ENCODE measurements at regions of chr14 and their contacts with region 1.

Region 1: GRCh38 chr14:89578156-89578555 is 161.1 kb upstream of the FOXN3 start:
- DNase-seq: no peak
- H3K4me3 ChIP-seq: peak overlapping the region in 1 of 2 donors; percentile 4
- H3K27ac ChIP-seq: peak overlapping the region; percentile 80 to 85
- H3K4me1 ChIP-seq: peaks cover 24 to 33% of the 10 kb centered on the region in 2 donors
- H3K27me3 ChIP-seq: no peaks in the 10 kb centered on the region
- CTCF ChIP-seq: no peak

Region 2: DNA sequence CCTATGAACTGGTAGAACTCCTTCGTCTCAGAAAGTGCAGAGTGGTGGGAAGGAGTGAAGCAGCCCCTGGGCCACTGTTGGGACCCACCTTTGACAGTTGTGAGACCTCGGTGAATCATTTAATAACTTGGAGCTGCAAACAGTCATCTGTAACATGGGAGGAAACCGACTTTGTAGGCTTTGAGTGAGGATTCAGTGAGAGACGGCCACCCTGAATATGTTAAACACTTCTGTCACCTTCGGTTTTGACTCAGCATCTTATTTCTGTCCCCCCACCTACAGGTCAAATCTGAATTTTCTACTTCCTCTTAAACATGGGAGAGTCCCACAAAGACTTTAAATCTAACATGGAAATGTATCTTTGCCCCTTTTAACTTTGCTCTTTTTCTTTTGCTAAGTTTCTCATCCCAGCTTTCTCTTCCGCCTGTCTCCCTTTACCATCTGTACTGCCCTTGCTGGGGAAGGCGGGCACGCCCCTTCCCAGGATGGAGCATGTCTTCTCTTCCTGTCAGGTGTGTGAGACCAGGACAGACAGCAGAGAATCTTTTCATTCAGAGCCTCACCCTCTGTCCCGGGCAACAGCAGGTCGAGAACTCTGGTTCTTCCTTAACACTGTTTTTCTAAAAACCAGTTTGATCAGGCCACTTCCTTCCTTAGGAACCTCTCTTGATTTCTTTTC is 978.3 kb before region 1 on chr14:
- intact Hi-C with region 1: no loop called
- DNase-seq: no peak
- H3K4me3 ChIP-seq: no peak overlapping the region
- H3K27ac ChIP-seq: no peak overlapping the region
- H3K4me1 ChIP-seq: no peaks in the 10 kb centered on the region
- H3K27me3 ChIP-seq: no peaks in the 10 kb centered on the region
- CTCF ChIP-seq: no peak

Region 3: DNA sequence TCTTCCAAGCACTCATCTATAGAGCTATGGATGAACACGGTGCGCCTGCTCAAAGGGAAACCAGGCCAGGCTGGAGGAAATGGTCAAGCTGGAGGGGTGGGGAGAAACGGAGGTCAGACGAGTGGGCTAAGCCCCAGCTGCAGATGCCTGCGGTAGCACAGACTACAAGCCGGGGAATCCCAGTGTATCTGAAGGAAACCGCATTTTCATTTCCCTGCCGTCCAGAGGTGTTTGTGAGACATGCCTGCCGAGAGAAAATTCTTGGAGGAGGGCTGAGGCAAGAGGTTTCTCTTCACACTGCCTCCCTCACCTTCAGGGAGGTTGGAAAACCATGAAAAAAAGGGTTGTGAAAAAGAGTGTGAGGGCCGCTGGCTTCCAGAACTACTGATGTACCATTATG is 59.1 kb before region 1 on chr14:
- intact Hi-C with region 1: no loop called
- DNase-seq: peak in 1 of 2 donors; percentile 1
- H3K4me3 ChIP-seq: no peak overlapping the region
- H3K27ac ChIP-seq: no peak overlapping the region
- H3K4me1 ChIP-seq: no peaks in the 10 kb centered on the region
- H3K27me3 ChIP-seq: no peaks in the 10 kb centered on the region
- CTCF ChIP-seq: no peak

Region 4: DNA sequence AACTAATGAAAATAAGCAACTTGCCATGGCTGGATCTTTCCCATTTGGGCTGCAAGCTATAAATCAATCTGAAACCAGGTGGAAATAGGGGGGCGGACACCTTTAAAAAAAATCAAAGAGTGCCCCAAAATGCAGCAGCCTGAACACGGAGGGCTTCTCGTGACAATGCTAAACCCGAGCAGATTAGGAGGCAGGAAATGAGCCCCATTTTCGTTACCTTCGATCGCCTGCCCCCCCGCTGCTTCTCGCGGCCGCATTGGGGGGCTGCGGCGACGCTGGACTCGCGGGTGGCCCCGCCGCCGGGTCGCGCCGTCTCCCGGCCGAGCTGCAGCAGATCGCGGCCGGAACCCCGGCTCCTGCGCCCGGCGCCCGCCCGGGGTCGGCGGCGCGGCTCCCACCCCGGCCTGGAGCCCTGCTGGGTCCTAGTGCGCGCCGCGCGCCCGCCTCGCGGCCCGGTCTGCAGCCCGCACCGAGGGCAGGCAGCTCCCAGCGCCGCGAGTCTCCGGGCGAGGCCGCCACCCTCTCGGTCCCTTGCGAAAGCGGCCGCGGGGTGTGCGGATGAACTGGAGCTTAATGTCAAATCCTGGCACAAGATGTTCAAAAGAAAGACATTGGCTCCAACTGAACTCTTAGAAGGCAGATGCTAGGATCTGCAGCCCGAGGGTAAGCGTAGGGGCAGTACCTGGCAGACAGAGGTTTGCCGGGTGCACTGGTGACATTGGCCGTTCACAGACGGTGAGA is 40.8 kb after region 1 on chr14:
- intact Hi-C with region 1: loop called (anchors 5 kb)
- DNase-seq: peak in 1 of 2 donors; percentile 83
- H3K4me3 ChIP-seq: peak overlapping the region; percentile 87 to 97
- H3K27ac ChIP-seq: peak overlapping the region; percentile 74 to 85
- H3K4me1 ChIP-seq: peaks cover 0 to 14% of the 10 kb centered on the region in 2 donors
- H3K27me3 ChIP-seq: no peaks in the 10 kb centered on the region
- CTCF ChIP-seq: no peak